ENCODE measurements at regions of chr10 and their contacts with region 1.

Region 1: GRCh38 chr10:60809157-60809556 is 30.9 kb downstream of the CDK1 start:
- DNase-seq: no peak

Region 2: DNA sequence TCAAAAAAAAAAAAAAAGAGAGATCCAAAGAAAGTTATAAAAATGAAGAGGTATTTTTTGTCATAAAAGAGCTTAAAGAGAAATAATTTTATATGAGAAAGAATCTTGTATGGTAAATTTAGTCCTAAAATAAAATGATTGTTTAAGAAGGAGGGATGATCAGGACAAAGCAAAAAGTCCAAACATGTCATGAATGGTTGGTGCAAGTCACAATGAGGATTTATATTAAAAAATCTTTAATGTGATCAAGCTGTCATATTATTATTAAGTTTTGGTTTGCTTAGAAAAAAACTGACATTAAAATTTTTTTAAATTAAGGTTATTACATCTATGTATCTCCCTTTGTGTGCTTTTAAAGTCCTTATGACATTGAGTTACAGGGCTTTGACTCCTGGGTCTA is 423.6 kb after region 1 on chr10:
- intact Hi-C with region 1: loop called (anchors 5 kb)
- DNase-seq: no peak